ENCODE measurements at regions of chr2 and their contacts with region 1.

Region 1: DNA sequence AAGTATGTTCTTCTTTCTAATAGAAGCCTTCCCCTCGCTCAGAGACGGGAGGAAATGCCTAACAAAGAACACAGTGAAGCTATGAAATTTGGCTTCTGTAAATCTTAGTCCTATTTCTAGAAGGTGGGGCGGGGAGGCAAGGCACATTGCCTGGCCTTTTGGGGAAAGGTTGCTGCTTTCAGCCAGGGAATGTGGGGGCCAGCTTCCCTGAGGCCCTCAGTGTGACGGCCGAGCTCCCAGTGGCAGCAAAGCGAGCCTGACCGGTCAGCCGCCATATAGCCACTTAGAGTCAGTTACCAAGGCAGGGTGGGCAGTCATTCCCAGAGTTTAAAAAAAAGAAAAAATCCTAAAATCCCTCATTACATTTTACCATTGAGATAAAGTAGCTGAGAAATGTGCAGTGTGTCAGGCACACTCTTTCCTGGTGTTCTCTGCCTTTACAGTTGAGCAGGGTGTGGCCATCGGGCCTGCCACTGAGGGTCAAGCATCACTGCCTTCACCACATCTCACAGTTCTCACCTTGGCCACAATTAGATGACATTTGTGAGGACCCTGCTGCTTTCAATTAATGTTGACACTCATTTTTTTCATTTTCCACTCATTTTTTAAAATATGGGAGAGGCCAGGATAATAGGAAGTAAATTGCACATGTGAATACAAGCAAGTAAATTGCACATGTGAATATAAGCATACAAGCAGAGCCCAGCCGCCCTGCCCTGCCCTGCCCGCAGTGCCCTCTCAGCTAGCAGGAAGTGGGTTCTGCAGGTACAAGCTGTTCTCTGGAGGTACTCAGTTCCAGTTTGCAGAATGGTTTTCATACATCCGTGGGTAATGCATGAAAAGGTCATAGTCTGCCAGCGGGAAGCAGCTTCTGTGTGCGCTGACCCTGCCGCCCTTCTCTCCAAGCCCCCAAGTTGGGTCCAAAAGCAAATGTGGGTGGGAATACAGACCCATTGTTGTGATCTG is 76.9 kb downstream of the WDSUB1 start:
- DNase-seq: no peak
- H3K4me3 ChIP-seq: no peak overlapping the region
- H3K27ac ChIP-seq: no peak overlapping the region
- H3K4me1 ChIP-seq: no peaks in the 10 kb centered on the region
- H3K27me3 ChIP-seq: no peaks in the 10 kb centered on the region
- CTCF ChIP-seq: no peak
- POLR2A ChIP-seq: no peak

Region 2: GRCh38 chr2:159195697-159196096 is 13.9 kb before region 1 on chr2:
- intact Hi-C with region 1: no loop called
- DNase-seq: no peak
- H3K4me3 ChIP-seq: no peak overlapping the region
- H3K27ac ChIP-seq: no peak overlapping the region
- H3K4me1 ChIP-seq: no peaks in the 10 kb centered on the region
- H3K27me3 ChIP-seq: no peaks in the 10 kb centered on the region
- CTCF ChIP-seq: no peak
- POLR2A ChIP-seq: no peak

Region 3: GRCh38 chr2:159300585-159300984 is 91.0 kb after region 1 on chr2:
- intact Hi-C with region 1: loop called (anchors 10 kb)
- DNase-seq: no peak
- H3K4me3 ChIP-seq: no peak overlapping the region
- H3K27ac ChIP-seq: no peak overlapping the region
- H3K4me1 ChIP-seq: no peaks in the 10 kb centered on the region
- H3K27me3 ChIP-seq: no peaks in the 10 kb centered on the region
- CTCF ChIP-seq: no peak
- POLR2A ChIP-seq: no peak

Measured in vagina (tissue), 2 donors.